Psoas muscle (tissue), 8 donors: ENCODE measurements at regions of chr3 and their contacts with region 1.

Region 1: DNA sequence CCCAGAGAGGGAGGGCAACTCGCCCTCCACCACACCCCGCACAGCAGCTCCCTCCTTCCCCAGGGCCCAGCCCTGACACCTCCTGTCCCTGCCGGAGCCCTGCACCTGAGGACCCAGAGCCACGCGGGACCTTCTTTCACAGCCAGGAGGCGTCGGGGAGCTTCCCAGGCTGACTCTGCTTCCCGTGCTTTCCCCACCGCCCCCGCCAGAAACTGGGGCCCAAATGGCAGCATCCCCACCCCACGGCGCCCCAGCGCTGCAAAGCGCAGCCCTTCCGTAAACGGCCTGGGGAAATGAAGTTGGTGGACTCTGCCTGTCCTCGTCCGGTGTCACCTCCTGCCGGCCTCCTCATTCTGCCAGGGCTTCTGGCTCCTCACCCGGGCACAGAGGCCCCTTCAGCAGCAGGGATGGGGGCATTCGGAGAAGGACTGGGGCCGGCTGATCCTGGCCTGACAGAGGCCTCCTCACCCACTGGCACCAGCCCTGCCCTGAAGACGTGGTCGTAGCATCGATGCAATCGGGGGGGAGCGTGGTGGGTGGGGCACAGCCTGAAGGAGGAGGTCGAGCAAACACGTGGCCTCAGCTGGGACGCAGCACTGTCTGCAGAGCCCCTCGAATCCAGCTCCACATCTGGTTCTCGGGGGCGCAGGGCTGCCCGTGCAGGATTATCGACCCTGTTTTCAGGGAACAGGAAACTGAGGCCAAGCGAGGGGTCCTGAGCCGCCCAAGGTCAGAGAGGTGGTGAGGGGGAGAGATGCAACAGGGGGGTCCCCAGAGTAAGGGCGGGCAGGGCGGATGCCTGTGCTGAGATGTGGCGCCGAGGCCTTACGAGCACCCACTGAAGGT is 235.4 kb downstream of the XXYLT1 start:
- DNase-seq: no peak
- ATAC-seq: no peak
- H3K4me3 ChIP-seq: no peak overlapping the region
- H3K27ac ChIP-seq: no peak overlapping the region
- H3K4me1 ChIP-seq: no peaks in the 10 kb centered on the region
- H3K27me3 ChIP-seq: no peaks in the 10 kb centered on the region
- CTCF ChIP-seq: no peak

Region 2: GRCh38 chr3:194967151-194968117 is 68.1 kb before region 1 on chr3:
- intact Hi-C with region 1: no loop called
- DNase-seq: no peak
- ATAC-seq: no peak
- H3K4me3 ChIP-seq: no peak overlapping the region
- H3K27ac ChIP-seq: no peak overlapping the region
- H3K4me1 ChIP-seq: no peaks in the 10 kb centered on the region
- H3K27me3 ChIP-seq: no peaks in the 10 kb centered on the region
- CTCF ChIP-seq: no peak

Region 3: DNA sequence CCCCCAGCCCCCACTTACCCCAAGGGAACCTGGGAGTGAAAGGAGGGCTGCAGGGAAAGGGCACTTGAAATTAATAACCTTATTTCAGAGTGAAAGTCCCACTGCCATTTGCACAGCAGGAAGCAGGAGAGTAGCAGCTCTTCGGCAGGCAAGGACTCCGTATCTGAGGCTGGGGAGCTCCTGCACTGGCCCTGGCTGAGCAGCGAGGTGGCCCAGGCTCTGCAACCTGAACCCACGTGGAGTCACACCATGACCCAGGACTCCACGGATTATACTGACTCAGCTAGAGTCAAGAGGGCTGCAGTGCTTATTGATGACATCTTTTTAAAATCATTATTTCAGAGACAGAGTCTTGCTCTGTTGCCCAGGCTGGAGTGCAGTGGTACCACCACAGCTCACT is 20.9 kb after region 1 on chr3:
- intact Hi-C with region 1: loop called in 1 of 2 experiments (anchors 2 kb)
- DNase-seq: peak in 1 of 2 donors; percentile 32
- ATAC-seq: no peak
- H3K4me3 ChIP-seq: no peak overlapping the region
- H3K27ac ChIP-seq: no peak overlapping the region
- H3K4me1 ChIP-seq: no peaks in the 10 kb centered on the region
- H3K27me3 ChIP-seq: no peaks in the 10 kb centered on the region
- CTCF ChIP-seq: no peak